ENCODE measurements at regions of chr4 and their contacts with region 1.

Region 1: DNA sequence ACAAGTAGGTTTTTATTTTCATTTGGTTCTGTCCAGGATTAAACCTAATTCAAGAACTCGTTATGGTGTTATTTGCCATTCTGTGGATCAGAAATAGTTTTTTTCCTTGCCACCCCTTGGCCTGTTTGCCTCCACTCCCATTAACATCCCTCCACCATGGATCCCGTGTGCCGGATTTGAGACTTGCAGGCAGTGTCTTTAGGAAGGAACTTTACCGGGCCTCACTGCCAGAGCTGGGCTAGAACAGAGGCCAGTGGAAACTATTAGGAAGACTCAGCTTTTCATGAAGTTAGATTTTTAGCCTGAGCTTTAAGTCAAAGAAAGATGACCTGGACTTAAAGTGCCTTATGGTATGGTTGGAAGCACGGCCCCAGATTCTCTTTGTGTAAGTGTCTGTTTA is 2.4 kb downstream of the KLHL2 start:
- DNase-seq: no peak
- ATAC-seq: no peak
- H3K4me3 ChIP-seq: no peak overlapping the region; a peak in 1 of 4 replicates
- H3K27ac ChIP-seq: no peak overlapping the region
- H3K4me1 ChIP-seq: peaks cover 22% of the 10 kb centered on the region
- H3K27me3 ChIP-seq: no peaks in the 10 kb centered on the region
- CTCF ChIP-seq: no peak

Region 2: GRCh38 chr4:165327211-165328100 is 117.7 kb after region 1 on chr4 and contains the start of gene MSMO1:
- CTCF ChIA-PET with region 1: no interaction called
- POLR2A ChIA-PET with region 1: no interaction called
- in situ Hi-C with region 1: no loop called
- intact Hi-C with region 1: loop called (anchors 10 kb)
- DNase-seq: peak; percentile 89
- ATAC-seq: peak; percentile 99
- H3K4me3 ChIP-seq: peak within 1 kb of the TSS; percentile 84 to 94
- H3K27ac ChIP-seq: peak within 1 kb of the TSS; percentile 93
- H3K4me1 ChIP-seq: peaks cover 2% of the 10 kb centered on the region; the same call in 1 of the 2 replicates
- H3K27me3 ChIP-seq: no peaks in the 10 kb centered on the region
- CTCF ChIP-seq: no peak
- total RNA-seq, gene MSMO1: 53.9 TPM